ENCODE measurements at regions of chr12 and their contacts with region 1.

Region 1: DNA sequence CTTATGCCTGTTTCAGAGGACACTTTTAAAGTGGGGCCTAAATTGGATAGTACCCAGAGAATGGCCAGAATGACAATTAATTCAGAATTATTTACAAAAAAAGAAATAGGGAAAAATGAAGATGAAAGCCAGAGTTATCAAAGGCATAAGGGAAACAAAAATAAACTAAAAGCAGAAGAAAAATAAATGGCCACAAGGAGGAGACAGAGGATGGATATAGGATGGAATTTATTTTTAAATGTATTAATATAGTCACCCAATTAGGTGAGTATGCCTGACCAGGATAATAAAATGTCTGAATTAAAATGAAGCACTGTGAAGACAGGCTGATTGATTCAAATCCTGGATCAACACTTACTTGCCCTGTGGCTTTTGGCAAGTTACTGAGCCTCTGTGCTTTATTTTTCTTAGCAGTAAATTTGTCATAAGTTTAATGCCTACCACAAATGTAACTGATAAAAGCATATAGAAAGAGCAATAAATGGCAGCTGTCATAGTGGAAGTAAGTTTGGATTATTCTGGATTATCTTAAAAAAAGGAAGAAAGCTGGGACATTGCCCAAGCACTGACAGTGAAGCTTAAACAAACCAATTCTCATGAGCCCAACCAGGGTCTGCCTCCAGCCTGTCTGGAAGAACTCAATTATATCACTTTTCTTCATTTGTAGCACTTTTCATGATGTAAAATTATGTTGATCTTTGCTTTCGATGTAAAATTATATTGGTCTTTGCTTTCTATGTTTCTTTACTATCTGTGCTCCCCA is 3.5 kb downstream of the CLEC9A start:
- DNase-seq: no peak
- ATAC-seq: no peak
- H3K4me3 ChIP-seq: no peak overlapping the region
- H3K27ac ChIP-seq: peak overlapping the region in 1 of 12 donors; percentile 46
- H3K4me1 ChIP-seq: peaks cover 0 to 5% (median 0%) of the 10 kb centered on the region in 12 donors
- H3K27me3 ChIP-seq: no peaks in the 10 kb centered on the region
- CTCF ChIP-seq: peak in 11 of 12 donors; percentile 40 to 77 (median 59)
- POLR2A ChIP-seq: no peak

Region 2: GRCh38 chr12:10082117-10082874 is 48.3 kb after region 1 on chr12:
- intact Hi-C with region 1: no loop called
- DNase-seq: no peak
- ATAC-seq: no peak
- H3K4me3 ChIP-seq: no peak overlapping the region
- H3K27ac ChIP-seq: no peak overlapping the region
- H3K4me1 ChIP-seq: peaks cover 0 to 8% (median 0%) of the 10 kb centered on the region in 12 donors
- H3K27me3 ChIP-seq: no peaks in the 10 kb centered on the region
- CTCF ChIP-seq: no peak
- POLR2A ChIP-seq: no peak

Region 3: DNA sequence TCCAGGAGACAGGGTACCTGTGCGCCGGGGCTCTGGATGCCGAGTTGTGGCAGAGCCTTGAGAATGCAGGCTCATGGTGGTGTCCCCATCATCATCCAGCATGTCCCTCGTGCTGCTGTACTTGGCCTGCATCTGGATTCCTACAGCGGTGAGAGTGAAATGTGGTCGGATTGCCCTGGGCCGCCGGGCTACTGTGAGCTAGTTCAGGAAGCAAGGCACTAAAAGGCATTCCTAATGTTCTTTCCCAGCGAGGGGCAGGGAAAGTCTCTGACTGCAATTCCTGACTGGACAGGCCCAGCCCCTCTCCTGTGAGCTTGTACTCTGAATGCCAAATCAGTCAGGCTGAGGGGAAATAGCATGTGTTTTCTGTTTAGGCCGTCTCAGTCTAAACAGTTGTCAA is 64.8 kb after region 1 on chr12 and contains the start of gene CLEC1A:
- intact Hi-C with region 1: loop called in 1 of 10 experiments (anchors 2 kb)
- DNase-seq: peak in 4 of 5 donors; percentile 35 to 58 (median 46)
- ATAC-seq: peak; percentile 74 to 86 (median 76)
- H3K4me3 ChIP-seq: peak within 1 kb of the TSS; percentile 2 to 61 (median 45)
- H3K27ac ChIP-seq: peak within 1 kb of the TSS; percentile 60 to 85 (median 75)
- H3K4me1 ChIP-seq: peaks cover 0 to 63% (median 10%) of the 10 kb centered on the region in 12 donors
- H3K27me3 ChIP-seq: no peaks in the 10 kb centered on the region
- CTCF ChIP-seq: no peak
- POLR2A ChIP-seq: peak in 1 of 2 donors; percentile 73
- total RNA-seq, gene CLEC1A: 1.2 to 7.3 (median 2.5) TPM

Region 4: GRCh38 chr12:10190558-10191388 is 156.8 kb after region 1 on chr12:
- intact Hi-C with region 1: loop called in 1 of 10 experiments (anchors 5 kb)
- DNase-seq: peak in 4 of 5 donors; percentile 35 to 63 (median 52)
- ATAC-seq: peak; percentile 75 to 98 (median 95)
- H3K4me3 ChIP-seq: no peak overlapping the region
- H3K27ac ChIP-seq: no peak overlapping the region
- H3K4me1 ChIP-seq: peaks cover 0 to 9% (median 2%) of the 10 kb centered on the region in 12 donors
- H3K27me3 ChIP-seq: peaks cover 0 to 8% (median 0%) of the 10 kb centered on the region in 9 donors
- CTCF ChIP-seq: peak; percentile 56 to 88 (median 74)
- POLR2A ChIP-seq: no peak